Dorsolateral prefrontal cortex (tissue), 120 donors: ENCODE measurements at regions of chr7 and their contacts with region 1.

Region 1: GRCh38 chr7:35037526-35038339 is 448 bp upstream of the DPY19L1 start:
- DNase-seq: peak; percentile 83 to 97 (median 92)
- H3K4me3 ChIP-seq: peak overlapping the region; percentile 60 to 87 (median 76)
- H3K27ac ChIP-seq: peak overlapping the region; percentile 32 to 98 (median 89)
- H3K27me3 ChIP-seq: no peaks in the 10 kb centered on the region
- CTCF ChIP-seq: peak; percentile 65 to 92 (median 82)

Region 2: DNA sequence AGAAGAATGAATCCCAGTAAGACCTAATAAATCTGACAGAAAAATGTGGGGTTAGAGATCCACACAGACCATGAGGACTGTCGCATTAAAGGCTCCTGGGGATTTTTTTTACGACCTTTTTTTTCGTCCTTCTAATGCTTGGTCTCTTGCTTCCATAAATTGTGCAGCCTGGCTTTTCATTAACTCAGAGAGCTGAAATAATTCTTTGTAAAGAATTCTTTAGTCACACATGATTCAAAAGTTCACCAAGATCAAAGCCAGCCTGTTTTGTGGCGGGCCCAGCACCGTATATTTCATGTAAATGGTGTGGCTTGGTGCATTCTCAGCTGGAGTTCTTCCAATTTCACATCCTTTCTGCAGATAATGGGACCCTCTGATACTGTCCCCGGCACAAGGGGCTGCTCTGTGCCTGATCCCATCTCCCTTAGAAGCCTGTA is 1339.0 kb before region 1 on chr7:
- intact Hi-C with region 1: no loop called
- DNase-seq: no peak
- H3K4me3 ChIP-seq: no peak overlapping the region
- H3K27ac ChIP-seq: no peak overlapping the region
- H3K27me3 ChIP-seq: no peaks in the 10 kb centered on the region
- CTCF ChIP-seq: no peak

Region 3: DNA sequence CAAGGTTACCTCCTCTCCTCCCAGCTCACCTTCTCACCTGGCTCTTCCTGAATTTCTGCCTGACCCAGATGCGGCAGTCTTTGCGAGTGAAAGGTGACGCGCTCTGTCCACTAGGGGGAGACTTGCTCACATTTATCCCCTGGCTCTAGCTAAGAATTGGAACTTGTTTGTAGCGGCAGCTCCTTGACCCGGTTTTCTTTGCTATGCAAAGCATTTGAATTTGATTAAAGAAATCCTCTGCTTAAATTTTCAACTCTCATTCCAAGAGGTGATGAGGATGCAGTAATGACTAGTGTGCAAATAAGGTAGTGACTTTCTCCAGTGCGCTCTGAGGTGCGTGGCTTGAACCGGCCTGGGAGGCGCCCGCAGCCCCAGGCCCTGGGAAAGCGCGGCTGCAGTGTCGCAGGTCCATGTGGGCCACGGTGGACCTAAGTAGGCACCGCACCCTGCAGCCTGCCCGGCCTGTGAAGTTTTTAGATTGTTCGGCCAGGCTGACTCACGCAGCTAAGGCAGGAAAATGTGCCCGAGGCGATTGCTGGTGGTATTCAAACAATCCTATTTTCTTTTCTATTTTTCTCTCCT is 716.6 kb before region 1 on chr7:
- intact Hi-C with region 1: loop called in 1 of 2 experiments (anchors 5 kb)
- DNase-seq: peak; percentile 28 to 74 (median 56)
- H3K4me3 ChIP-seq: peak overlapping the region in 46 of 59 donors; percentile 1 to 59 (median 34)
- H3K27ac ChIP-seq: peak overlapping the region in 8 of 59 donors; percentile 2 to 46 (median 31)
- H3K27me3 ChIP-seq: peaks cover 0 to 4% (median 0%) of the 10 kb centered on the region in 45 donors
- CTCF ChIP-seq: peak; percentile 58 to 91 (median 84)

Region 4: DNA sequence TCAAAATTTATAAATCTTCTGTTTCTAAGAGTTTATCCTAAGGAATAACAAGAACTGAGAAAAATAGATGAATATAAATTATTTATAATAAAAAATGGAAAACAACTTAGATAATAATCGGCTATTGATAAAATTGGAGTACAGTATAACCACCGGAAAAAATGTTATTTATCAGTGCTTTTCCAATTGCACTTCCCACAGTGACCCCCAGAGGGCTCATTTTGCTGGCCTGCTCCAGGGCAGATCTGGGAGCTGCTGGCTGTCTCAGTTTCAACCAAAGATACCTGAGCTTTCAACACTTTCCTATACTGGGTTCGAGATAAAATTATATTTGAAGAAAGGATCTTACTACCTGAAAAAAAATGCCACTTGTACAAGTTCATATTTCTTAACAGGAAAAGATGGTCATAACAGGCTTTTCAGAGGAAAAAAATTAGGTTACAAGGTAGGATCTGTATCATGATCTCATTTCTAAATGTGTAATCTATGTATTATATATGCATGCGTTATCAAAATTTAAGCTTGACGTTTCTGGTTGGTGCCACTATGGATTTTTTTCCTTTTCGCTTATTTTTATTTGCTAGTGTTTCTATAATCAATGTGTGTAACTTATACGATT is 214.0 kb before region 1 on chr7:
- intact Hi-C with region 1: loop called in 1 of 2 experiments (anchors 5 kb)
- DNase-seq: peak in 9 of 10 donors; percentile 38 to 70 (median 60)
- H3K4me3 ChIP-seq: no peak overlapping the region
- H3K27ac ChIP-seq: no peak overlapping the region
- H3K27me3 ChIP-seq: no peaks in the 10 kb centered on the region
- CTCF ChIP-seq: peak; percentile 73 to 97 (median 90)

Region 5: GRCh38 chr7:34875481-34875880 is 162.3 kb before region 1 on chr7:
- intact Hi-C with region 1: loop called in 1 of 2 experiments (anchors 10 kb)
- DNase-seq: peak in 2 of 10 donors; percentile 35 to 43
- H3K4me3 ChIP-seq: no peak overlapping the region
- H3K27ac ChIP-seq: peak overlapping the region in 48 of 59 donors; percentile 11 to 87 (median 76)
- H3K27me3 ChIP-seq: no peaks in the 10 kb centered on the region
- CTCF ChIP-seq: no peak

Region 6: GRCh38 chr7:34928049-34928448 is 109.7 kb before region 1 on chr7:
- intact Hi-C with region 1: loop called in 1 of 2 experiments (anchors 10 kb)
- DNase-seq: peak; percentile 25 to 91 (median 76)
- H3K4me3 ChIP-seq: peak overlapping the region in 1 of 59 donors; percentile 27
- H3K27ac ChIP-seq: no peak overlapping the region
- H3K27me3 ChIP-seq: no peaks in the 10 kb centered on the region
- CTCF ChIP-seq: peak in 55 of 56 donors; percentile 43 to 93 (median 77)

Region 7: DNA sequence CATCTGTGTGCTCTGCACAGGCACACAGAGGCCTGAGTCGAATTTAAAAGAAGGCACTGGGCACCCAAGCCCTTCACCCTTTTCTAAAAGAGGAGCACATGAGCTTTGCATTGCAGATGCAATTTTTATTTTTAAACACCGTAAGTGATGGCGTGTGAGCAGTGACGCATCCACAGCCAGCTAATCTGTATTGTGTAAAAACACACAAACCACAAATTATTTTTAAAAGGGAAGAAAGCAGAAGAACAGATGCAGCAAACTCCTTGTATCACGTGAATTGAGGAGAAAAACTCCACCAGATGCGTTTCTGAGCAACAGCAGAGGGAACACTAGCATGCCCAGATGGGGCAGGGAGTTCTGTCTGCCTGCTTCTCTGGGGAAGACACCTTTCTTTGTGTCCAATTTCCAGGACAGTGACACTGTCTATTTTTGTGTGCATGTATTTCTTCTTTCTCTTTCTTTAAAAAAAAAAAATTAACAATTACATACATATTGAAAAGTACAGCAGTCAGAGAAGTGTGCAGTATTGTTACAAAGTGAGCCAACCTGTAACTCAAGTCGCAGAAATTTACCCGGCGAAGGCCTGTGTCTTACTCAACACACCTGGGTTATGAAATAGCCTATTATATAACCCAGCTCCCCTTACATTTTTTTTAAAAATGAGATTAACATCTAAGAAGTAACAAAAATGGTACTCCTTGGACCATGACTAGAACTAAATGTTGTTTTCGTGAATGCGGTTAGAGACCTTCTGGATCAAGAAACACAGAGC is 1154.5 kb after region 1 on chr7:
- intact Hi-C with region 1: no loop called
- DNase-seq: peak in 1 of 10 donors; percentile 53
- H3K4me3 ChIP-seq: peak overlapping the region in 6 of 59 donors; percentile 0 to 28 (median 8)
- H3K27ac ChIP-seq: peak overlapping the region in 51 of 59 donors; percentile 6 to 81 (median 57)
- H3K27me3 ChIP-seq: no peaks in the 10 kb centered on the region
- CTCF ChIP-seq: peak in 3 of 56 donors; percentile 8 to 31 (median 20)